Naive thymus-derived CD4-positive, alpha-beta T cell (primary cell): ENCODE measurements at regions of chr2 and their contacts with region 1.

Region 1: GRCh38 chr2:207166039-207166348 is 246 bp upstream of the KLF7 start:
- DNase-seq: peak; percentile 88 to 99 (median 98)
- ATAC-seq: peak; percentile 93
- H3K4me3 ChIP-seq: peak overlapping the region; percentile 89
- H3K4me3 Mint-ChIP-seq: peak overlapping the region; percentile 94 to 100 (median 98)
- H3K27ac ChIP-seq: peak overlapping the region; percentile 100
- H3K27ac Mint-ChIP-seq: peak overlapping the region; percentile 93 to 99 (median 97)
- H3K4me1 ChIP-seq: peaks cover 0 to 17% of the 10 kb centered on the region in 2 donors
- H3K4me1 Mint-ChIP-seq: peaks cover 32 to 48% (median 36%) of the 10 kb centered on the region in 7 donors
- H3K27me3 ChIP-seq: no peaks in the 10 kb centered on the region
- H3K27me3 Mint-ChIP-seq: peaks cover 0 to 2% (median 0%) of the 10 kb centered on the region in 5 donors

Region 2: DNA sequence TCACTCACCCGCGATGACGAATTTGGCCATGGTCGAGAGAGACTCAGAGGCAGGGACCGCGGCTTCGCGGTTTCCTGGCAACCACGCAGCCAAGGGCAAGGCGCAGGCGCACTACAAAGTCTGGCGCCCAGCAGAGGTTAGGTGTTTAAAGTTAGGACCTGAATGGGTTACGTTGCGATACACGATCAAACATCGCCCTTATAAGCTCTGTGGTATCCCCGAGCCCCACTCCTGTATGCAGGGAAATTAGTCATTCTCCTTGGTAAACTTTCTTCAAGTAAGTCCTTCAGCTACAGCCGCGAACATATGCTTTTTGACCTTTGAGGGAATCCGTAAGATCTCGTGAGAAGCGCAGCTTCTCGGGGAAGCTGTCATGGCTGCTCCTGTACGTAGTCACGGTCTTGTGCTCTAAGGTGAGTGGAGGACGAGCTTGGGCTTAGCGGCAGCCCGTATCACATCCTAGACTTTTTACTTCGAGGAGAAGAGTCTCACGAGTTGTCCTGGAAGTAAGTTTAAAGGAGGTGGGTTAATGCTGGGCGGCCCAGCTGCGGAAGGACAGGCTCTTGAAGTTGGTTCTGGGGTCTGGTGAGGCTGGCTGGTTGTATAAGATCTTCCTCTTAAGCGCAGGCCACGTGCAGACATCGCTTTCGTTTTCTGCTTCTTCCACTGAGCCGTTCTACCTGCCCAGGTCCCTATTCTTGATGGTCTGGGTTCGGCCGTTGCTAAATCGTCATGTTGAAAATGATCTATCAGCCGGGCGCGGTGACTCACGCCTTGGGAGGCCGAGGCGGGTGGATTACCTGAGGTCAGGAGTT is 400.5 kb before region 1 on chr2 and contains the starts of genes FASTKD2 and MDH1B:
- CTCF ChIA-PET with region 1: no interaction called
- POLR2A ChIA-PET with region 1: interaction called, 8 read pairs
- intact Hi-C with region 1: loop called (anchors 1 kb)
- DNase-seq: peak; percentile 62 to 91 (median 85)
- ATAC-seq: peak; percentile 93
- H3K4me3 ChIP-seq: peak within 1 kb of the TSS; percentile 70
- H3K4me3 Mint-ChIP-seq: peak within 1 kb of the TSS in 8 of 10 donors; percentile 89 to 96 (median 94)
- H3K27ac ChIP-seq: peak within 1 kb of the TSS; percentile 95
- H3K27ac Mint-ChIP-seq: peak within 1 kb of the TSS; percentile 93 to 99 (median 97)
- H3K4me1 ChIP-seq: peaks cover 12 to 16% of the 10 kb centered on the region in 2 donors
- H3K4me1 Mint-ChIP-seq: peaks cover 13 to 46% (median 41%) of the 10 kb centered on the region in 7 donors
- H3K27me3 ChIP-seq: no peaks in the 10 kb centered on the region
- H3K27me3 Mint-ChIP-seq: peaks cover 0 to 4% (median 0%) of the 10 kb centered on the region in 5 donors
- total RNA-seq, gene FASTKD2: 16.5 to 31.9 (median 24.5) TPM
- total RNA-seq, gene MDH1B: 0.17 to 0.54 (median 0.24) TPM in 4 of 5 experiments, not detected in the other

Region 3: GRCh38 chr2:207073801-207074678 is 92.0 kb before region 1 on chr2:
- CTCF ChIA-PET with region 1: no interaction called
- POLR2A ChIA-PET with region 1: interaction called, 22 read pairs
- intact Hi-C with region 1: loop called (anchors 1 kb)
- DNase-seq: peak in 6 of 9 donors; percentile 10 to 30 (median 22)
- ATAC-seq: peak; percentile 58
- H3K4me3 ChIP-seq: no peak overlapping the region
- H3K4me3 Mint-ChIP-seq: peak overlapping the region; percentile 1 to 80 (median 62)
- H3K27ac ChIP-seq: no peak overlapping the region
- H3K27ac Mint-ChIP-seq: peak overlapping the region; percentile 36 to 81 (median 74)
- H3K4me1 ChIP-seq: peaks cover 3 to 11% of the 10 kb centered on the region in 2 donors
- H3K4me1 Mint-ChIP-seq: peaks cover 25 to 44% (median 35%) of the 10 kb centered on the region in 7 donors
- H3K27me3 ChIP-seq: no peaks in the 10 kb centered on the region
- H3K27me3 Mint-ChIP-seq: peaks cover 0 to 4% (median 0%) of the 10 kb centered on the region in 5 donors

Region 4: GRCh38 chr2:207133820-207134519 is 32.0 kb before region 1 on chr2:
- CTCF ChIA-PET with region 1: interaction called, 4 read pairs
- POLR2A ChIA-PET with region 1: interaction called, 433 read pairs
- intact Hi-C with region 1: loop called (anchors 5 kb)
- DNase-seq: no peak
- ATAC-seq: no peak
- H3K4me3 ChIP-seq: no peak overlapping the region
- H3K4me3 Mint-ChIP-seq: peak overlapping the region in 6 of 10 donors; percentile 11 to 76 (median 66)
- H3K27ac ChIP-seq: no peak overlapping the region
- H3K27ac Mint-ChIP-seq: peak overlapping the region in 7 of 9 donors; percentile 17 to 96 (median 87)
- H3K4me1 ChIP-seq: peaks cover 0 to 37% of the 10 kb centered on the region in 2 donors
- H3K4me1 Mint-ChIP-seq: peaks cover 48 to 99% (median 89%) of the 10 kb centered on the region in 7 donors
- H3K27me3 ChIP-seq: no peaks in the 10 kb centered on the region
- H3K27me3 Mint-ChIP-seq: no peaks in the 10 kb centered on the region

Region 5: DNA sequence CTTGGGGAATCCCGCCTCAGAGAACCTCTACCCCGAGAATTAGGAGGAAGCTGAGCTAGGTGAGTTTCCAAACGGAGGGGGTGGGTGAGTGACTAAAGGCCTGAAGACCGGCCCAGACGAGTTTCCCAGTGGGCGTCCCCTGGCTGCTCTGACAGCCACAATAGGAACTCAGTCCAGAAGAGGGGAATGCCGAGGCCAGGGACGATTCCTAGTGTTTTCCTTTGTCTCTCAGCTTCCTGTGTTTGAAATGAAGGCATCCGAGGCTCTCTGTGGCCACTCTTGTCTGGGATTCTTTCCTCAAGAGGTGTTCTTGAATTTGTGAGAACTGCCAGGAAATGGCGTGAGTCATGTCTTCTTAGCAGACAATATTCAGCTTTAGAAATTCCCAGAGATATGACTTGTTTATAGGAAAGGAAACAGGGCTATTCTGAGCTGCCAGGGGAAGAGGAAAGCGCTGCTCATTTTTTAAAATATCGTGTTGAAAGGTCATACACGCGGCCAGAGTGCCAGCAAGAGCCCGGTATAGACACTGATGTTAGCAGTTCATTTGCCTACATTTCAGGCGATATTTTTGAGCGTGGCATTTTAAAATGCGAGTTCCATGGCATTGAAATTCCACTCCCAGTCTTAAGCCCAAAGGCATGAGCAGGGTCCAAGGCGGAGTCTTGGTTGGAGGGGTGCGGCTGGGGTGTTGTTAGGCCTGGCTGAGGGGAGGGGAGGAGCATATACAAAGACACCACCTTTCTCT is 168.8 kb after region 1 on chr2:
- CTCF ChIA-PET with region 1: no interaction called
- POLR2A ChIA-PET with region 1: no interaction called
- intact Hi-C with region 1: loop called in 1 of 2 experiments (anchors 1 kb)
- DNase-seq: peak in 1 of 9 donors; percentile 57
- ATAC-seq: no peak
- H3K4me3 ChIP-seq: no peak overlapping the region
- H3K4me3 Mint-ChIP-seq: peak overlapping the region in 2 of 10 donors; percentile 20 to 59
- H3K27ac ChIP-seq: no peak overlapping the region
- H3K27ac Mint-ChIP-seq: peak overlapping the region in 1 of 9 donors; percentile 84
- H3K4me1 ChIP-seq: peaks cover 0 to 20% of the 10 kb centered on the region in 2 donors
- H3K4me1 Mint-ChIP-seq: peaks cover 9 to 75% (median 17%) of the 10 kb centered on the region in 7 donors
- H3K27me3 ChIP-seq: no peaks in the 10 kb centered on the region
- H3K27me3 Mint-ChIP-seq: no peaks in the 10 kb centered on the region

Region 6: DNA sequence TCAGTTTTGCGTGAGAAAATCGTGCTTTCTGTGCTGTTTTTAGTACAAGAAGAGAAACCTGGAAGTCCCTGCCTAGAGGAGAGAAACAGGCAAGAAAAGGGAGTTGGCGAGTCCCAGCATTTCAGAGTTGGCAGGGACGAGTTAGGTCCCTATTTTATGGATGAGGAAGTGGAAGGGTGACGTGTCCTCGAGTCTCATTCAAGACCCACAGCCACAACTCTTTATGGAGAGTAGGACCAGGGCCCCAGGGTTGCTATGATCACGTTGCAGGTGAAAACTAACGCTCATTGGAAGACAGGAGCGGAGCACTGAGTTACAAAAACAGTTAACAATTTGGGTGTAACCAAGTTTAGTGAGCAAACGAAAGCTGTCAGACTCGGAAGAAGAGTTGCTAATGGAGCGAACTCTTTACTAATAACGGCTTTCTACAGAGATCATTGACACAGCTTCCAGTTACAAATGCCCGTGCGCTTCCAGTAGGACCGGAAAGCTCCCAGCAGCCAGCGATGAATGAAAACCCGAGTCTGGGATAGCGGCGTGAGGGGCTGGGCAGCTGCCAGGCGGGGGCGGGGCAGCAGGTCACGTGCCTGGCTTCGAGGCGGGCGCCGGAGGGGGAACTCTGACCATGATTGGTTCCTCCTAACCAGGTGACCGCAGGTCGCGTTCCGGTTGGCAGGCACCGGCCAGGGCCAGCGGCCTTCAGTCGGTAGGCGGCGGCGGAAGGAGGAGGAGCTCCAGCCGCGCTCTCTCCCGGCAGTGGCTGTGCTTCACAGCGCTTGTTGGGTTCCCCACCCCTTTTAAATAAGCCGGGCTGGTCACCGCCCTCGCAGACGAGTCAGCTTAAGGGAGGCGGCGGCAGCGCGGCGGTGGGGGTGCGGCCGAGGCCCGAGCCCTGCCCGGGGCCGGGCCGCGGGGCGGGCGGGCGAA is 545.1 kb after region 1 on chr2 and contains the start of gene CCNYL1:
- CTCF ChIA-PET with region 1: no interaction called
- POLR2A ChIA-PET with region 1: interaction called, 11 read pairs
- intact Hi-C with region 1: loop called (anchors 1 to 2 kb)
- DNase-seq: peak; percentile 93 to 98 (median 97)
- ATAC-seq: peak; percentile 98
- H3K4me3 ChIP-seq: peak within 1 kb of the TSS; percentile 88
- H3K4me3 Mint-ChIP-seq: peak within 1 kb of the TSS; percentile 94 to 99 (median 97)
- H3K27ac ChIP-seq: peak within 1 kb of the TSS; percentile 83
- H3K27ac Mint-ChIP-seq: peak within 1 kb of the TSS; percentile 83 to 98 (median 93)
- H3K4me1 ChIP-seq: peaks cover 4 to 11% of the 10 kb centered on the region in 2 donors
- H3K4me1 Mint-ChIP-seq: peaks cover 15 to 32% (median 27%) of the 10 kb centered on the region in 7 donors
- H3K27me3 ChIP-seq: no peaks in the 10 kb centered on the region
- H3K27me3 Mint-ChIP-seq: peaks cover 0 to 3% (median 0%) of the 10 kb centered on the region in 5 donors
- total RNA-seq, gene CCNYL1: 6.7 to 16.7 (median 10.7) TPM